ENCODE measurements at regions of chr9 and their contacts with region 1.

Region 1: DNA sequence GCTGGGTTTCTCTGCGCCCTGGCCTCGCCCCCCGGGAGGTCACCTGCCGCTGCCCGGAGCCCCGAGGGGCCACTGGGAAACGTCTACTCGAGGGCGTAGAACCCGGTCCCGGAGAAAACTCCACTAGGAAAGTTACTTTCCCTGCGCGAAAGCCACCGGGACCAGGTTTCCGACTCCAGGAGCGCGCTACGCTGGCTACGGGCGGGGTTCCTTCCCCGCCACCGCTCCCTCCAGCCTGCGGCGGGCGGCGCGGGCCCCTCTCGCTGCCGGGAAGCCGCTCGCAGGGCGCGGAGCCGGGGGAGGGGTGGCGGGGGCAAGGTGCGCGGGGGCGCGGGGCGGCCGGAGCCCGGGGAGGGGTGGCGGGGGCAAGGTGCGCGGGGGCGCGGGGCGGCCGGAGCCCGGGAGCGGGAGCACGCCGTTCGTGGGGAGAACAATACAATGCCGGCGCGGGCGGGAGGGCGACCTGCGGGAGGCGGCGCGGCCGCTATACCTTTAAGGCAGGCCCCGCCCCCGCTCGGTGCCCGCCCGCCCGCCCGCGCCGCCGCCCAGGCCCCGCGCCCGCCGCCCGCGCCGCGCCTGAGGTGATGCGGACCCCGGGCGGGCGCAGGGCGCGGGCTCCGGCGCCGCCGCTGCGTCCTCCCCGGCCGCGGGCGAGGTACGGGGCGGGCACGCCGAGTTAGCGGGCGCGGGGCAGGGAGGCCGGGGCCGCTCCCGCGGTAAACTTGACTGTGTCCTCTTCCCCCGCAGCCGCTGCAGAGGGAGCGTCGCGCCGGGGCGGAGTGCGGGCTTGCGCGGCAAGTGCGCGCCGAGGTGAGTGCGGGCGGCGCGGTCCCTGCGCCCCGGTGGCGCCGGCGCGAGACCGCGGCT is 278.1 kb downstream of the AOPEP start:
- DNase-seq: peak; percentile 32
- H3K4me3 Mint-ChIP-seq: peak overlapping the region; percentile 83
- H3K27ac Mint-ChIP-seq: peak overlapping the region; percentile 80
- H3K4me1 Mint-ChIP-seq: peaks cover 41% of the 10 kb centered on the region
- H3K27me3 Mint-ChIP-seq: peaks cover 45% of the 10 kb centered on the region

Region 2: GRCh38 chr9:94166237-94166963 is 838.2 kb before region 1 on chr9:
- intact Hi-C with region 1: loop called (anchors 5 kb)
- DNase-seq: peak; percentile 92
- H3K4me3 Mint-ChIP-seq: peak overlapping the region; percentile 95
- H3K27ac Mint-ChIP-seq: peak overlapping the region; percentile 89
- H3K4me1 Mint-ChIP-seq: peaks cover 46% of the 10 kb centered on the region
- H3K27me3 Mint-ChIP-seq: peaks cover 2% of the 10 kb centered on the region

Region 3: DNA sequence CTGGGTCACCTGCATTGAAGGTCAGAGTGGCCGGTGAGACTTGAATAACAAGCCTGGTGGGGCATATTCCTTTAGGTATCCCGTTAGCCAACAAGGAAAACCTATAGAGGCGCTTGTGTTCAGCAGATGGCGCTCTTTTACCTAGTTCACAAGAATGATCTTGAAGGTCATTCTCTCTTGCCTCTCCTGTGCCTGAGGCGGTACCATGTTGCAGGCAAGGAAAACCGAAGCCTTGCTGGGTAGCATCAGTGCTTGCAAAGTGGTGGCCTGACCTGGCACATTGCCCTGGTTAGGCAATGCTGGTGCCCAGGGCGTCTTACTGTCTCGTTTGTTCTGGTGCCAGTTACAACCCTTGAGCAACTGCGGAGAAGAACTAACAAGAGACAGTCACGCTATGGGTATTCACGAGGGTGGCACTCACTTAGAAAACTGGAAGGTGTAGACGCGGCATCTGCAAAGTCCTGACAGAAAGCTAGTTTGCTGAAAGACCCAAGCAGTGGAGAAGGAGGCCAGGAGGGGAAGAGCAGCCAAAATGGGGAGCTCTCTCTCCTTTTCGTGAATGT is 221.5 kb before region 1 on chr9:
- intact Hi-C with region 1: loop called (anchors 5 kb)
- DNase-seq: peak; percentile 11
- H3K4me3 Mint-ChIP-seq: no peak overlapping the region
- H3K27ac Mint-ChIP-seq: no peak overlapping the region
- H3K4me1 Mint-ChIP-seq: peaks cover 20% of the 10 kb centered on the region
- H3K27me3 Mint-ChIP-seq: no peaks in the 10 kb centered on the region

Region 4: DNA sequence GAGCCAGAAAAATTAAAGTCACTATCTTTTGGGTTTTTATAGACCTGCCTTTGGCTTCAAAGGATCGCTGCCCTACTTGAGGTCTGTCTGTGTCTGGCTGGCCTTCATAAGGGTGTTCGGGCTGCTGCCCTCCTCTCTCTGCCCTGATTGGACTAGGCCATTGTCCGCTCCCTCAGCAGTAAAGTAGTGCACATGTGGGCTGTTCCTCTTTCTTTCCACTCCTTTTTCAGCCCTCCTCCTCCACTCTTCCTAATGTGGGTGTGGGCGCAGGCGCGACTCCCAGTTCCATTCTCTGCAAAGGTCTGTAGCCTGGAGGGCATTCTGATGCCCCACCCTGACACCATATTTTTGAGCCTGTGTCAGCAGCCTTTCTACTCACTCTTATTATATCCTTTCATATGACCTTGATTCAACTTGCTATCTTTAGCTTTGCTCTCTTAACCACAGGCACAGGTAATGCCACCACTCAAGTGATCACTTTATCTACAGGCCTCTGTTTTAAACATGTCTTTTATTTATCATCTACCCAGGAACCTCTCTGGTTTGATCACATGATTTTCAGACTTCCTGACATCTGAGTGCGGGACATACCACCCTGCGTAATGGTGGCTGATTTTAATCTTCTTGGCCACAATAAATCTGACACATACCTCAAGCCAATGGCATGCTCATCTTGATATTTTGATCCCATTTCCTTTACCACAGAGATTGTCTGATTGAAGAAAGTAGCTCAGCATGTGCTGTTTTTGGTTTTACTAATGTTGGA is 133.7 kb before region 1 on chr9:
- intact Hi-C with region 1: loop called (anchors 5 kb)
- DNase-seq: no peak
- H3K4me3 Mint-ChIP-seq: no peak overlapping the region
- H3K27ac Mint-ChIP-seq: peak overlapping the region; percentile 75
- H3K4me1 Mint-ChIP-seq: peaks cover 58% of the 10 kb centered on the region
- H3K27me3 Mint-ChIP-seq: peaks cover 4% of the 10 kb centered on the region

Region 5: DNA sequence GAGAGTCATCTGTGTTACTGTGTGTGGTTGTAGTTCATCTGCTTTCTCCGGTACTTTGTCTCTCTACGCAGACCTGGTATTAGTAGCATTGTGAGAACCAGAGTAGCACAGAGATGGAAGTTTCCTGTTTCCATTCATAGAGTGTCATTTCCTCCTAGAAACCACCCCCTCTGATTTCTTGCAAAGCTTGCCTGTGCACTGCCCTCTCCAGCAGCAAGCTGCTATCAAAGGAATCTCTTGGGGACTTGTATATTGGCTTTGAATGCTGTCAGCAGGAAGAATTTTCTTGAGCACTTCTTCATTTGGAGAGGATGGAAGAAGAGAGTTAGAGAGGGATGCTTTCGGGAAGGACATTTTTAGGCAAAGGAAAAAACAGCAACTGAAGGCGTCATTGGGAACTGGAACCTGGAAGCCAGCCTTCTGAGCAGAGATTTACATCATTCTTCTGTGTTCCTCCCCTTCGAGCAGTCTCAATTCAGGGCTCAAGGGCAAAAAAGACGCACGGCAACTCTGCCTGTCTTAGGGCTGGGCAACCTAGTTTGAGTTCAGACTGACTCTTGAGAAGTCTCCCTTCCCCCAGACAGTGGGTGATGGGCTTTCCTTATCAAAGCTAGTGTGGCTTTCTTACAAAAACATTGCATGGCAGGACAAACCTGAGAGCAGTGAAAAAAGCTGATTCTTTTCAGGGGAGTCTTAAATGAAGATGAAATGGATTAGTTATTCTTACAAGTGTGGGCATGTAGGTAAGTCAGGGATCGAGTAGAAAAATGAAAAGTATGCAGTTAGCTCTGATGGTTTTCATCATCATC is 51.9 kb before region 1 on chr9:
- intact Hi-C with region 1: loop called (anchors 2 kb)
- DNase-seq: peak; percentile 11
- H3K4me3 Mint-ChIP-seq: peak overlapping the region; percentile 66
- H3K27ac Mint-ChIP-seq: peak overlapping the region; percentile 79
- H3K4me1 Mint-ChIP-seq: peaks cover 45% of the 10 kb centered on the region
- H3K27me3 Mint-ChIP-seq: peaks cover 1% of the 10 kb centered on the region

Region 6: DNA sequence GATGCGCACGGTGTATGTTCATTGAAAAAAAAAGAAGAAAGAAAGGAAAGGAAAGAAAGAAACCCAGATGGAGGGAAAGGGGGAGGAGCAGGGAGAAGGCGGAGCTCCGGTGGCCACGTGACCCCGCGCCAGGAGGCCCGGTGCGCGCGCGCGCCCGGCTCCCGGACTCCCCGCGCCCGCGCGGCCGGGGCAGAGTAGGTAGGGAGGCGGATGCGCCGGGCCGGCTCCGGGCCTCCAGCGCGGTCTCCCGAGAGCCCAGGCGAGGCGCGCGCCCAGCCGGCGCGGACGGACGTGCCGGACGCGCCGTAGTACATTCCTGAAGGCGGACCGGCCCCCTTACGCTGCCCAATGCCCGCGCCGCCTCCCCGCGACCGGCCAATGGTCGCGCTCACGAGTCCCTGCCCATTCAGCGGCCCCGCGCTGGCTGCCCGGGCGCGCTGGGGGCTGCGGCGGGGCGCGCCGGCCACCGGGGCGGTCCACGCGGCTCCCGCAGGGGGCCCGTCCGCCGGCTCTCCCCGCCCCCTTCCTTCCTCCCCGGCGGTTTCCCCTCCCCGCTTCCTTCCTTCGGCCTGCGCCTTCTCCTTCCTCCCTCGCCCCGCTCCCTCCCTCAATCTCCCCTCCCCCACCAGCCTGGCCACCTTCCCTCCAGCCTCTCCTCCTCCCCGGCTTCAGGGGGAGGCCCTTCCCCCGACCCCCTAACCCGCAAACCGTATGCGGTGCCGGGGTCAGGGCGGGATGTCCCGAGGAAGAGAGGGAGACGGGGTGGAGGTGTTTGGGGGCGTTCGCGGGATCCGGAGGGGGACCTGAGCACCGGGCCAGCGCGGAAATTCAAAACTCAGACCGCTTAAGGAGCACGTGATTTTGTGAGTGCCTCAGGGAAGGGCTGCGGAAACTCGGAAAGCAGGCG is 506.3 kb after region 1 on chr9:
- intact Hi-C with region 1: loop called (anchors 10 kb)
- DNase-seq: peak; percentile 82
- H3K4me3 Mint-ChIP-seq: peak overlapping the region; percentile 84
- H3K27ac Mint-ChIP-seq: peak overlapping the region; percentile 88
- H3K4me1 Mint-ChIP-seq: peaks cover 41% of the 10 kb centered on the region
- H3K27me3 Mint-ChIP-seq: peaks cover 61% of the 10 kb centered on the region

Measured in activated T-helper 1 cell treated with anti-CD3 and anti-CD28 coated beads, Interleukin-12 subunit alpha, Interleukin-12 subunit beta, Interleukin-2, Interleukin-4 antibody, amounts not matched to agents 30 ng/mL and 10 ng/mL and 1 ng/mL, durations not matched to agents 14 hours and 24 hours and 36 hours (primary cell).